CD14-positive monocyte (primary cell): ENCODE measurements at regions of chr6 and their contacts with region 1.

Region 1: DNA sequence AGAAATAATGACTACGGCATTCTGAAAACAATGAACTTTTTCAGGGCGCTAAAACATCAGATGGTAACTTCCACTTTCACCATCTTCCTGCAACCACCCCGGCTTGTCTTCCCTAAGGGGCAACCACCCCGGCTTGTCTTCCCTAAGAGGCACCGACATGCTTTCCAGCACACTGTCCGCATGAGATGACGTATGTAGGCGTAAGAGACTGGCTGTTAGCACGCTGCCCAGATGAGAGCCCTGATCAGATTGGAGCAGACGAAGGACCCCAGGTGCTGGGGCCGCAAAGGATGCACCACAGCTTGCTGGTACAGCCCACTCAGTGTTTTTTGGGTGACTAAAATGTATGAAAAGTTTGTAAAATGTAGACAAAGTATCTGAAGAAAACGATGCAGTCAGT is 29.3 kb downstream of the ASCC3 start:
- DNase-seq: no peak
- H3K4me3 ChIP-seq: no peak overlapping the region
- H3K4me3 Mint-ChIP-seq: no peak overlapping the region
- H3K27ac ChIP-seq: no peak overlapping the region
- H3K27ac Mint-ChIP-seq: no peak overlapping the region
- H3K4me1 ChIP-seq: no peaks in the 10 kb centered on the region
- H3K4me1 Mint-ChIP-seq: no peaks in the 10 kb centered on the region
- H3K27me3 ChIP-seq: no peaks in the 10 kb centered on the region
- H3K27me3 Mint-ChIP-seq: no peaks in the 10 kb centered on the region
- CTCF ChIP-seq: no peak

Region 2: DNA sequence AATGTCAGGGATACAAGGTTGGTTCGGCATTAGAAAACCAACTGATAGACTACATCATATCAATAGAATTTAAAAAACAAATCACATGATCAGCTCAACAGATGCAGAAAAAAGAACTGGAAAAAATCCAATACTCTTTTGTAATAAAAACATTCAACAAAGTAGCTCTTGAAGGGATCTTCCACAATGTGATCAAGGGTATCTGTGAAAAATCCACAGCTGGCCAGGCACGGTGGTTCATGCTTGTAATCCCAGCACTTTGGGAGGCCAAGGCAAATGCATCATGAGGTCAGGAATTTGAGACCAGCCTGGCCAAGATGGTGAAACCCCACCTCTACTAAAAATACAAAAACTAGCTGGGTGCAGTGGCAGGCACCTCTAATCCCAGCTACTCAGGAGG is 33.8 kb before region 1 on chr6:
- intact Hi-C with region 1: no loop called
- DNase-seq: no peak
- H3K4me3 ChIP-seq: no peak overlapping the region
- H3K4me3 Mint-ChIP-seq: no peak overlapping the region
- H3K27ac ChIP-seq: no peak overlapping the region
- H3K27ac Mint-ChIP-seq: no peak overlapping the region
- H3K4me1 ChIP-seq: no peaks in the 10 kb centered on the region
- H3K4me1 Mint-ChIP-seq: no peaks in the 10 kb centered on the region
- H3K27me3 ChIP-seq: no peaks in the 10 kb centered on the region
- H3K27me3 Mint-ChIP-seq: no peaks in the 10 kb centered on the region
- CTCF ChIP-seq: no peak

Region 3: DNA sequence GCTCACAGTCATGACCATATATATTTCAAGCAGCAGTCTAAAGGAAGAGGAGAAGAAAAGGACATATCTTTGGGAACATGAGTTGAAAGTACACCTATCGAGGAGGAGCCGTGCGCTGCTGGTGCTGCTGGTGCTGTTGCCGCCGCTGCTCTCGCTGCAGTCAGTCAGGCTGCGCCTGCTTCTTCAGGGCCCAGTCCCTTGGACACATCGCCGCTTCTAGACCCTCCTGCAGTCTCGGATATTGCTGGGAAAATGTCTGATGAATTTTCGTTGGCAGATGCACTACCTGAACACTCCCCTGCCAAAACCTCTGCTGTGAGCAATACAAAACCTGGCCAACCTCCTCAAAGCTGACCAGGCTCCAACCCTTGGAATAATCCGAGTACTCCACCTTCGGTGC is 37.5 kb after region 1 on chr6:
- intact Hi-C with region 1: loop called in 1 of 2 experiments (anchors 2 kb)
- DNase-seq: no peak
- H3K4me3 ChIP-seq: no peak overlapping the region
- H3K4me3 Mint-ChIP-seq: no peak overlapping the region
- H3K27ac ChIP-seq: no peak overlapping the region
- H3K27ac Mint-ChIP-seq: no peak overlapping the region
- H3K4me1 ChIP-seq: no peaks in the 10 kb centered on the region
- H3K4me1 Mint-ChIP-seq: no peaks in the 10 kb centered on the region
- H3K27me3 ChIP-seq: no peaks in the 10 kb centered on the region
- H3K27me3 Mint-ChIP-seq: peaks cover 0 to 7% (median 1%) of the 10 kb centered on the region in 3 donors
- CTCF ChIP-seq: no peak

Region 4: GRCh38 chr6:101083533-101084172 is 231.8 kb after region 1 on chr6:
- intact Hi-C with region 1: no loop called
- DNase-seq: no peak
- H3K4me3 ChIP-seq: no peak overlapping the region
- H3K4me3 Mint-ChIP-seq: no peak overlapping the region
- H3K27ac ChIP-seq: no peak overlapping the region
- H3K27ac Mint-ChIP-seq: no peak overlapping the region
- H3K4me1 ChIP-seq: no peaks in the 10 kb centered on the region
- H3K4me1 Mint-ChIP-seq: no peaks in the 10 kb centered on the region
- H3K27me3 ChIP-seq: no peaks in the 10 kb centered on the region
- H3K27me3 Mint-ChIP-seq: no peaks in the 10 kb centered on the region
- CTCF ChIP-seq: no peak